Calu3 (cell line): ENCODE measurements at regions of chr17 and their contacts with region 1.

Region 1: GRCh38 chr17:39153599-39154051 is 2.2 kb upstream of the PLXDC1 start:
- DNase-seq: peak; percentile 100
- H3K4me3 Mint-ChIP-seq: peak overlapping the region; percentile 95
- H3K27ac Mint-ChIP-seq: peak overlapping the region; percentile 99
- H3K4me1 Mint-ChIP-seq: peaks cover 29% of the 10 kb centered on the region
- H3K27me3 Mint-ChIP-seq: peaks cover 89% of the 10 kb centered on the region
- CTCF ChIP-seq: peak; percentile 28

Region 2: DNA sequence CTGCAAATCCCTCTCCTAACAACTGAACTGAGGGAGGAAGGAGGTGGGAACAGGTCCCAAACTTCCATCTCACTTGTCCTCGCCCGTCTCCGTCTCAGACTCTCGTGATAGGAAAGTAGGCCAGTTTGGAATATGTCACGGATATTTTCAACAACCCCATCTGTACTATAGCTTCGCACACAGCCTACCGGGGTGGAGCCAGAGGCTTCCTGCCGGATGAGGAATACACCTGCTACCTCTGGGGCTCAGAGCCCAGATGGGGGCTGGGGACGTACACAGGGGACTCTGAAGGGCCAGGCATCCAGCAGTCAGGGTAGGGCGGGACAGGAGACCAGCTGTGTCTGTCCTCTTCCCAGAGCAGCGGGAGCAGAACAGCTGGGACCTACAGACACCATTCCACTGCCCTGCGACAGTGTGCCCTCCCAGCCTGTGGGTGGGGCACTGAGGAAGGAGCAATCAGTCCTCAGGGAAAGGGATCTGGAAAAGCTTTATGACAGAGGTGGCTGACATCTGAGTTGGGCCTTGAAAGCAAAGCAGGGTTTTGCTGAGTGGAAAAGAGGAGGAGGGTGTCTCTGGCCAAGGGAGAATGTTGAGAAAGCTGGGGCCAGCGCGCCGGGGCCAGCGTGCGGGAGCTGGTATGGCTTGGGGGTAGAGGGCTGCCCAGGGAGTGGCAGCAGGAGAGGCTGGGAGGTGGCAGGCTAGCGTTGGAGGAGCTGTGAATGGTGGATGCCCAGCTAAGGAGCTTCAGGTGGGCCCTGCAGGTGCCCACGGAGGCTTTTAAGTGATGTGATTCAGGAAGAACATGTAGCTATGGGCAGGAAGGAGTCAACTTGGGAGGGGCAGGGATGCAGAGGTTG is 536.4 kb before region 1 on chr17:
- CTCF ChIA-PET with region 1: no interaction called
- intact Hi-C with region 1: loop called (anchors 5 kb)
- DNase-seq: no peak
- H3K4me3 Mint-ChIP-seq: no peak overlapping the region
- H3K27ac Mint-ChIP-seq: no peak overlapping the region
- H3K4me1 Mint-ChIP-seq: peaks cover 18% of the 10 kb centered on the region
- H3K27me3 Mint-ChIP-seq: peaks cover 61% of the 10 kb centered on the region
- CTCF ChIP-seq: no peak

Region 3: GRCh38 chr17:38799378-38800236 is 354.0 kb before region 1 on chr17 and contains the start of gene PIP4K2B:
- CTCF ChIA-PET with region 1: interaction called, 6 read pairs
- intact Hi-C with region 1: loop called (anchors 5 kb)
- DNase-seq: peak; percentile 100
- H3K4me3 Mint-ChIP-seq: peak within 1 kb of the TSS; percentile 83
- H3K27ac Mint-ChIP-seq: peak within 1 kb of the TSS; percentile 78
- H3K4me1 Mint-ChIP-seq: peaks cover 39% of the 10 kb centered on the region
- H3K27me3 Mint-ChIP-seq: no peaks in the 10 kb centered on the region
- CTCF ChIP-seq: peak; percentile 32
- total RNA-seq, gene PIP4K2B: 101 and 120 TPM in 2 replicates

Region 4: GRCh38 chr17:39026980-39027451 is 126.6 kb before region 1 on chr17:
- CTCF ChIA-PET with region 1: interaction called, 10 read pairs
- intact Hi-C with region 1: no loop called
- DNase-seq: peak; percentile 83
- H3K4me3 Mint-ChIP-seq: peak overlapping the region; percentile 70
- H3K27ac Mint-ChIP-seq: no peak overlapping the region
- H3K4me1 Mint-ChIP-seq: peaks cover 7% of the 10 kb centered on the region
- H3K27me3 Mint-ChIP-seq: peaks cover 70% of the 10 kb centered on the region
- CTCF ChIP-seq: no peak

Region 5: GRCh38 chr17:39174907-39175694 is 21.5 kb after region 1 on chr17:
- CTCF ChIA-PET with region 1: interaction called, 41 read pairs
- intact Hi-C with region 1: no loop called
- DNase-seq: peak; percentile 92
- H3K4me3 Mint-ChIP-seq: no peak overlapping the region
- H3K27ac Mint-ChIP-seq: no peak overlapping the region
- H3K4me1 Mint-ChIP-seq: peaks cover 16% of the 10 kb centered on the region
- H3K27me3 Mint-ChIP-seq: no peaks in the 10 kb centered on the region
- CTCF ChIP-seq: peak; percentile 100

Region 6: GRCh38 chr17:39244600-39245570 is 91.3 kb after region 1 on chr17:
- CTCF ChIA-PET with region 1: interaction called, 64 read pairs
- intact Hi-C with region 1: loop called (anchors 2 kb)
- DNase-seq: peak; percentile 100
- H3K4me3 Mint-ChIP-seq: no peak overlapping the region
- H3K27ac Mint-ChIP-seq: peak overlapping the region; percentile 3
- H3K4me1 Mint-ChIP-seq: peaks cover 15% of the 10 kb centered on the region
- H3K27me3 Mint-ChIP-seq: peaks cover 26% of the 10 kb centered on the region
- CTCF ChIP-seq: peak; percentile 100

Region 7: GRCh38 chr17:39894681-39895376 is 741.2 kb after region 1 on chr17:
- CTCF ChIA-PET with region 1: no interaction called
- intact Hi-C with region 1: no loop called
- DNase-seq: peak; percentile 63
- H3K4me3 Mint-ChIP-seq: no peak overlapping the region
- H3K27ac Mint-ChIP-seq: no peak overlapping the region
- H3K4me1 Mint-ChIP-seq: peaks cover 23% of the 10 kb centered on the region
- H3K27me3 Mint-ChIP-seq: peaks cover 15% of the 10 kb centered on the region
- CTCF ChIP-seq: no peak